Left cardiac atrium (tissue), 4 donors: ENCODE measurements at regions of chr5 and their contacts with region 1.

Region 1: GRCh38 chr5:87069974-87070624 is 197.6 kb upstream of the RASA1 start:
- DNase-seq: peak; percentile 28
- ATAC-seq: peak; percentile 41 to 53

Region 2: GRCh38 chr5:87393331-87393730 is 323.2 kb after region 1 on chr5:
- intact Hi-C with region 1: loop called in 1 of 2 experiments (anchors 10 kb)
- DNase-seq: no peak
- ATAC-seq: peak in 1 of 2 donors; percentile 74